ENCODE measurements at regions of chr6 and their contacts with region 1.

Region 1: DNA sequence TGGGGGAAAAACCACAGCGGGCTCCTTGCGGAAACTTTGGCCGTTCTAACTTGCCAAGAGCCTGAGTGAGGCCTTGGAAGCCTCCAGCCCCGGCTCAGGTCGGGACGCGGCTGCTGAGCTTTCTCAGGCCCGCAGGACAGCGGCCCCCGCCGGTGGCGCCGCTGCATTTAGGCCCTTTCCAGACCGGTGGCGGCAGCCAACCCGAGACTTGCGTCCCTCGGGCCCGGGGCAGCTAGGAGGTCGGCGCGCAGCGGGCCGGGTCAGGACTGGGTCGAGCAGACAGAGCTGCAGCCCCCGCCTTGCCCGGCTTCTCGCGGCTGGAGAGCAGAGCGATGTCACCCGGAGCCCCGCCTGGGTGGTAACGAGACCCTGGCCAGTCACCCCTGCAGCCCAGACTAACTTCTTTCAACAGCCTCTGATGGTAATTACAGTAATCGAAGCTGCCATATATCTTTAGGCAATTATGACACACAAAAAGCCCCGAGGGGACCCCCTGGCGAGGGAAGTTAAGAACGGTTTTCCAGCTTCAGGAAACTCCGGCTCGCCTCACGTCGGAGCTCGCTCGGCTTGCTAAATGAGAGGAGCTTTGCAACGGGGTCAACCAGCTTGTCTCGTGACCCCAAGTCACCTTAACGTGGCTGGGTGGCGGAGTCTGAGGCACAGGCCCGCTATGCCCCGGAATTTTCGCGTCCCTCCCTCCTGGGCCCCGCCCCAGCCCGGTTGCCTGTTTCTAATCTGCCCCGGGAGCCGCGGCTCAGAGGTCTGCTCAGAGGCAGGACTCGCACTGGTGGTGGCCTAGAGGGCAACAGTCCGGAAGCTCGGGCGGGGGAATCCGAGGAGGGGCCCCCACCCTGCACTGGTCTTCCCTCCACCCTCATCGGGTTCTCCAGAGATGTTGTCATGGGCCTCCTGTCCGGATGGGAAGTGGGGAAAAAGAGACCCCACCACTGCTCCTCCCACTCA is 3.0 kb downstream of the NR2E1 start:
- DNase-seq: peak; percentile 57
- ATAC-seq: peak; percentile 5
- H3K4me3 Mint-ChIP-seq: peak overlapping the region; percentile 52
- H3K27ac Mint-ChIP-seq: no peak overlapping the region
- H3K4me1 Mint-ChIP-seq: peaks cover 60% of the 10 kb centered on the region
- H3K27me3 Mint-ChIP-seq: peaks cover 100% of the 10 kb centered on the region
- CTCF ChIP-seq: no peak

Region 2: DNA sequence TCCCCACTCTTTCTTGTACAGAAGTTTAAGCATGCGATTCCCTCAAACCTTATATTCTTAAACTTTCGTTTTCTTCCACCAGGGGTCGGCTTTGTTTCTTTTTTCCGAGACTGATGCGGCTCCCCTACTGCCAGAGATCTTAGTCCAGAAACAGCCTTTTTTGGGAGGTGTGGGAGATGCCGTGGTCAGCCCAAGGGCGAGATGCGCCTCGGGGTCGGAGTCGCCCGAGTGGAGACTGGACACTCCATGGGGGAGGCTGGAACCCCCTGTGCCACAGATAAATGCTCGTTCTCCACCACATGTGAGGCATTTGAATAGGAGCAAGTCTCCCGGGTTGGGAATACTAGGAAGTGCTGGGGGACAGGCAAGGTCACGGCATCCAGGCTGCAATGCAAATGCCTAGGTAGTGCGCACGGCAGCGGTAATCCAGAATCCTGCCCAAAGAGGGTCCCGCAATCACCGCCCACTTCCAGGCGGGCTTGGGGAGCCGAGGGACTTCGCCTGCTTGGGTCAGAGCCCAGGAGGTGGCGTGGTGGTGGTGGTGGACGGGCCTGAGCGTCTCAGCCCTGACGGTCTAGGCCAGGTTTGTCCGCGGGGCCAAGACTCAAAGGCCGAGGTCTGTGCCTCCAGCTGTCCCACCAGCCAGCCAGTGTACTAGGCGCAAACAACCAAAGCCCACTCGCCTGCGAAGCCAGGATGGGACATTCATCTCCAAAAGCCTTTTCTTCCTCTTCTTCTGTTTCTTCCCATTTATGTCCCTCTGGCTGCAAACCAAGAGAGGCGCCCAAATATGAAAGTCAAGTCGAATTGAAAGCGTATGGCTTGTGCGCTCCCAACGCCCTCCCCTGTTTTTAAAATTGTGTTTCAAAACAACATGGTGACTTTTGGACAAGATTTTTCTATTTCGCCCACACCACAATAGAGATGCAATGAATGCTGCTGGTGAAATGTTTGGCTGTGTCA is 54.9 kb before region 1 on chr6:
- CTCF ChIA-PET with region 1: interaction called, 42 read pairs
- POLR2A ChIA-PET with region 1: interaction called, 7 read pairs
- DNase-seq: peak; percentile 67
- ATAC-seq: peak; percentile 49
- H3K4me3 Mint-ChIP-seq: peak overlapping the region; percentile 63
- H3K27ac Mint-ChIP-seq: no peak overlapping the region
- H3K4me1 Mint-ChIP-seq: peaks cover 39% of the 10 kb centered on the region
- H3K27me3 Mint-ChIP-seq: peaks cover 96% of the 10 kb centered on the region
- CTCF ChIP-seq: no peak; the same call in 1 of the 2 replicates

Region 3: GRCh38 chr6:108133594-108134179 is 35.1 kb before region 1 on chr6:
- CTCF ChIA-PET with region 1: interaction called, 12 read pairs
- POLR2A ChIA-PET with region 1: interaction called, 3 read pairs
- DNase-seq: peak; percentile 88
- ATAC-seq: peak; percentile 94
- H3K4me3 Mint-ChIP-seq: peak overlapping the region; percentile 66
- H3K27ac Mint-ChIP-seq: no peak overlapping the region
- H3K4me1 Mint-ChIP-seq: peaks cover 21% of the 10 kb centered on the region
- H3K27me3 Mint-ChIP-seq: peaks cover 95% of the 10 kb centered on the region
- CTCF ChIP-seq: no peak

Region 4: GRCh38 chr6:108203189-108204112 is 34.7 kb after region 1 on chr6:
- CTCF ChIA-PET with region 1: no interaction called
- POLR2A ChIA-PET with region 1: no interaction called
- DNase-seq: no peak
- ATAC-seq: no peak
- H3K4me3 Mint-ChIP-seq: no peak overlapping the region
- H3K27ac Mint-ChIP-seq: no peak overlapping the region
- H3K4me1 Mint-ChIP-seq: peaks cover 3% of the 10 kb centered on the region
- H3K27me3 Mint-ChIP-seq: no peaks in the 10 kb centered on the region
- CTCF ChIP-seq: no peak

Measured in WTC11 (cell line).